ENCODE measurements at regions of chr7 and their contacts with region 1.

Region 1: DNA sequence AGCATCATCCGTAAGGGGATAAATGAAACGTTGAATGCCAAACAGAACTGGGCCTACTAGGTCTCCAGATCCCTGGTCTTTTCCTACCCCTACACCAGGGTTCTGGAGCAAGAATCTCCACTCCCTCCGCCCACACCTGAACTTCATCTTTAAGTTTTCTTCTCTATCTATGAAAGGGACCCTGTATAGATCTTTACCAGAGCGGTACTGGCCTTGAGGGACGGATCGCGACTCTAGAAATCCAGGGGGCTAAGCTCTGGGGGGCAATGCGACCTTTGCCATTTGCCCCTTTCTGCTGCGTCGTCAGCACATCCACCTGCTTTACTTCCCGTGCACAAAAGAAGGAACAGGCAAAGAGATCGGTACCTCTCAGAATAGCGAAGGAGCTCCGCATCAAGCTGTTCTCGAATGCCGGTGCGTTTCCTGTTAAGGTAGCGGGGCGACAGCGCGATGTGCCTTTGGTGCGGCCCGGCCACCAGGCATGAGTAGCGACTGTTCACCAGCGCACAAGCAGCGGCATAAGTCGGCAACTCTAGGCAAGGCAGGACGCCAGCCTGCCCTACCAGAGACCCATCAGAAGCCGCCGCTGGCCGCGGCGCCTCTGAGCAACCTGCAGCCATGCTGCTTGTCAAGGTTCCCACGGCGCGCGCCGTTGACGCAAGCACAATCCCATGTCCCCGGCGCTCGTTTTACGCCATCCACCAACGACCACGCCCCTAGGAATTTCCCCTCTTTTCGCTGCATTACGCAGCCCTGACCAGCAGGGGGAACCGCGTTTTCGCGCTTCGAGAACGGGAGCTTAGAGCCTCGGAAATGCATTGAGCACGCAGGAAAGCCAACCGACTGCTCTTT is at the start of gene POLR1F:
- DNase-seq: peak; percentile 98
- ATAC-seq: peak; percentile 97
- H3K4me3 ChIP-seq: peak within 1 kb of the TSS; percentile 60 to 95 (median 85)
- H3K4me3 Mint-ChIP-seq: peak within 1 kb of the TSS; percentile 96
- H3K27ac ChIP-seq: peak within 1 kb of the TSS; percentile 87 to 88
- H3K27ac Mint-ChIP-seq: peak within 1 kb of the TSS; percentile 94
- H3K4me1 ChIP-seq: peaks cover 17 to 20% of the 10 kb centered on the region in 2 donors
- H3K4me1 Mint-ChIP-seq: peaks cover 41% of the 10 kb centered on the region
- H3K27me3 ChIP-seq: no peaks in the 10 kb centered on the region
- H3K27me3 Mint-ChIP-seq: peaks cover 3% of the 10 kb centered on the region
- CTCF ChIP-seq: peak; percentile 80
- total RNA-seq, gene POLR1F: 13.8 and 14.0 TPM in 2 replicates

Region 2: DNA sequence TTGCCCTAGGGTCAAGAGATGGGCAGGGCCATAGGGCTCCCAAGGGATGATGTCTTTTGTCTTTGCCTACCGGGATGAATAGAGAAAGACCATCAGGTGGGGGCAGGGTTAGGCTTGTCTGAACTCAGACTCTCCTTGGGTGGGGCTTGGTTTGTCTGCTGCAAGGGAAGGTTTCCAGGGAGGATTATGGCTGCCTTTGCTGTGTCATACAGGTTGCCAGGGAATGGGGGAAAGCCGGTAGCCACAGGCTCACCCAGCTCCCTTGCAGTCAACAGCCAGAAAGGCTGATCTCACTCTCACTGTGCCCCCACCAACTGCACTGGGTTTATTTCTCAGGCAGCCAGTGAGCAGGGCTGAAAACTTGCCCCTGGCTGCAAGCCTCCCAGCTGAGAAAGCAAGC is 253.0 kb before region 1 on chr7:
- CTCF ChIA-PET with region 1: no interaction called
- POLR2A ChIA-PET with region 1: no interaction called
- intact Hi-C with region 1: no loop called
- DNase-seq: no peak
- ATAC-seq: no peak
- H3K4me3 ChIP-seq: no peak overlapping the region
- H3K4me3 Mint-ChIP-seq: no peak overlapping the region
- H3K27ac ChIP-seq: no peak overlapping the region
- H3K27ac Mint-ChIP-seq: no peak overlapping the region
- H3K4me1 ChIP-seq: no peaks in the 10 kb centered on the region
- H3K4me1 Mint-ChIP-seq: no peaks in the 10 kb centered on the region
- H3K27me3 ChIP-seq: no peaks in the 10 kb centered on the region
- H3K27me3 Mint-ChIP-seq: no peaks in the 10 kb centered on the region
- CTCF ChIP-seq: no peak

Region 3: DNA sequence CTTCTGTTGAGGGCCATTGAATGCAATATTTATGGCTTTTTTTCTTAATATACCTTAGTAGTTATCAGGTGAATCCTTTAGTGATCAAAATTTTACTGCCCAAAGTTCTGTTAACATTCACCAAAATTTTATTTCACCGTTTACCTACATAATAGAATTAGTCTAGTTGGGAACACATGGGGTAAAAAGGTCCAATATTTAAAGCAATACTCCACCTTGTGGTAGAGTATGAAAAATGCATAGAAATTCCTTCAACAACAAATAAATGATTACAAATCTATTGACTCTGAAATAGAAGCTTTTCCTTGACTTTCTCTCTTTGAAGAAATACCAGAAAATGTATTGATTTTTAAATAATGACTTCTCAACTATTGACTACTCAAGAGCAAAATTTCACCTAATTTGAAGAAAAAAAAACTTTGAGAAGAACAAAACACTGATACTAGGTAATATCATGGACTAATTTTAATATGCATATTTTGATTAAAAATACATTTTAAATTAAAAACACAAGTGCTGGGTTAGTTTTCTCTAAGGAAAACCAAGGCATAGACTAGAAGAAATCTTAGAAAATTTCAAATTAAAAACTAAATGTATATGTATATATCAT is 43.1 kb before region 1 on chr7:
- CTCF ChIA-PET with region 1: interaction called, 9 read pairs
- POLR2A ChIA-PET with region 1: no interaction called
- intact Hi-C with region 1: loop called (anchors 1 kb)
- DNase-seq: peak; percentile 54
- ATAC-seq: peak; percentile 57
- H3K4me3 ChIP-seq: no peak overlapping the region
- H3K4me3 Mint-ChIP-seq: peak overlapping the region; percentile 27
- H3K27ac ChIP-seq: no peak overlapping the region
- H3K27ac Mint-ChIP-seq: no peak overlapping the region
- H3K4me1 ChIP-seq: peaks cover 9 to 17% of the 10 kb centered on the region in 2 donors
- H3K4me1 Mint-ChIP-seq: peaks cover 16% of the 10 kb centered on the region
- H3K27me3 ChIP-seq: no peaks in the 10 kb centered on the region
- H3K27me3 Mint-ChIP-seq: no peaks in the 10 kb centered on the region
- CTCF ChIP-seq: peak; percentile 85

Region 4: DNA sequence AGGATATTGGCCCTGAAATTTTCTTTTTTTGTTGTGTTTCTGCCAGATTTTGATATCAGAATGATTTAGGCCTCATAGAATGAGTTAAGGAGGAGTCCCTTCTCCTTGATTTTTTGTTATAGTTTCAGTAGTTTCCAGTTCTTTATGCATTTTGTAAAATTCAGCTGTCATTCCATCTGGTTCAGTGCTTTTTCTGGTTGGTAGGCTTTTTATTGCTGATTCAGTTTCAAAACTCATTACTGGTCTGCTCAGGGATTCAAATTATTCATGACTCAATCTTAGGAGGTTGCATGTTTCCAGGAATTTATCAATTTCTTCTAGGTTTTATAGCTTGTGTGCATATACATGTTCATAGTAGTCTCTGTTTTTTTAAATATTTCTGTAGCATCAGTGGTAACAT is 74.9 kb after region 1 on chr7:
- CTCF ChIA-PET with region 1: no interaction called
- POLR2A ChIA-PET with region 1: no interaction called
- intact Hi-C with region 1: no loop called
- DNase-seq: no peak
- ATAC-seq: no peak
- H3K4me3 ChIP-seq: no peak overlapping the region
- H3K4me3 Mint-ChIP-seq: no peak overlapping the region
- H3K27ac ChIP-seq: no peak overlapping the region
- H3K27ac Mint-ChIP-seq: no peak overlapping the region
- H3K4me1 ChIP-seq: no peaks in the 10 kb centered on the region
- H3K4me1 Mint-ChIP-seq: no peaks in the 10 kb centered on the region
- H3K27me3 ChIP-seq: peaks cover 0 to 2% (median 0%) of the 10 kb centered on the region in 4 experiments
- H3K27me3 Mint-ChIP-seq: peaks cover 3% of the 10 kb centered on the region
- CTCF ChIP-seq: no peak

Region 5: GRCh38 chr7:20114468-20114867 is 405.8 kb after region 1 on chr7:
- CTCF ChIA-PET with region 1: interaction called, 3 read pairs
- POLR2A ChIA-PET with region 1: no interaction called
- intact Hi-C with region 1: loop called (anchors 2 kb)
- DNase-seq: peak; percentile 85
- ATAC-seq: peak; percentile 91
- H3K4me3 ChIP-seq: no peak overlapping the region
- H3K4me3 Mint-ChIP-seq: peak overlapping the region; percentile 60
- H3K27ac ChIP-seq: peak overlapping the region in 1 of 2 donors; percentile 62
- H3K27ac Mint-ChIP-seq: peak overlapping the region; percentile 69
- H3K4me1 ChIP-seq: peaks cover 19 to 23% of the 10 kb centered on the region in 2 donors
- H3K4me1 Mint-ChIP-seq: peaks cover 23% of the 10 kb centered on the region
- H3K27me3 ChIP-seq: no peaks in the 10 kb centered on the region
- H3K27me3 Mint-ChIP-seq: no peaks in the 10 kb centered on the region
- CTCF ChIP-seq: peak; percentile 27

Region 6: GRCh38 chr7:20330240-20330927 is 621.8 kb after region 1 on chr7 and contains the start of gene ITGB8:
- CTCF ChIA-PET with region 1: interaction called, 11 read pairs
- POLR2A ChIA-PET with region 1: no interaction called
- intact Hi-C with region 1: no loop called
- DNase-seq: peak; percentile 72
- ATAC-seq: peak; percentile 68
- H3K4me3 ChIP-seq: peak within 1 kb of the TSS; percentile 46 to 74 (median 70)
- H3K4me3 Mint-ChIP-seq: peak within 1 kb of the TSS; percentile 99
- H3K27ac ChIP-seq: no peak within 1 kb of the TSS
- H3K27ac Mint-ChIP-seq: peak within 1 kb of the TSS; percentile 86
- H3K4me1 ChIP-seq: peaks cover 14 to 21% of the 10 kb centered on the region in 2 donors
- H3K4me1 Mint-ChIP-seq: peaks cover 19% of the 10 kb centered on the region
- H3K27me3 ChIP-seq: peaks cover 0 to 17% (median 14%) of the 10 kb centered on the region in 4 experiments
- H3K27me3 Mint-ChIP-seq: peaks cover 21% of the 10 kb centered on the region
- CTCF ChIP-seq: no peak
- total RNA-seq, gene ITGB8: 0.30 and 0.32 TPM in 2 replicates

Region 7: GRCh38 chr7:20661884-20662283 is 953.3 kb after region 1 on chr7:
- CTCF ChIA-PET with region 1: no interaction called
- POLR2A ChIA-PET with region 1: no interaction called
- intact Hi-C with region 1: no loop called
- DNase-seq: no peak
- ATAC-seq: no peak
- H3K4me3 ChIP-seq: no peak overlapping the region
- H3K4me3 Mint-ChIP-seq: no peak overlapping the region
- H3K27ac ChIP-seq: no peak overlapping the region
- H3K27ac Mint-ChIP-seq: no peak overlapping the region
- H3K4me1 ChIP-seq: no peaks in the 10 kb centered on the region
- H3K4me1 Mint-ChIP-seq: no peaks in the 10 kb centered on the region
- H3K27me3 ChIP-seq: no peaks in the 10 kb centered on the region
- H3K27me3 Mint-ChIP-seq: peaks cover 9% of the 10 kb centered on the region
- CTCF ChIP-seq: no peak

Region 8: GRCh38 chr7:20798081-20798693 is 1089.6 kb after region 1 on chr7:
- CTCF ChIA-PET with region 1: no interaction called
- POLR2A ChIA-PET with region 1: no interaction called
- intact Hi-C with region 1: loop called (anchors 5 kb)
- DNase-seq: no peak
- ATAC-seq: peak; percentile 80
- H3K4me3 ChIP-seq: peak overlapping the region in 4 of 5 experiments; percentile 21 to 72 (median 54)
- H3K4me3 Mint-ChIP-seq: peak overlapping the region; percentile 76
- H3K27ac ChIP-seq: no peak overlapping the region
- H3K27ac Mint-ChIP-seq: no peak overlapping the region
- H3K4me1 ChIP-seq: peaks cover 15 to 23% of the 10 kb centered on the region in 2 donors
- H3K4me1 Mint-ChIP-seq: peaks cover 19% of the 10 kb centered on the region
- H3K27me3 ChIP-seq: peaks cover under 1 to 58% (median 54%) of the 10 kb centered on the region in 4 experiments
- H3K27me3 Mint-ChIP-seq: peaks cover 54% of the 10 kb centered on the region
- CTCF ChIP-seq: no peak

Measured in B cell (primary cell).